AG04450 (cell line): ENCODE measurements at regions of chr5 and their contacts with region 1.

Region 1: DNA sequence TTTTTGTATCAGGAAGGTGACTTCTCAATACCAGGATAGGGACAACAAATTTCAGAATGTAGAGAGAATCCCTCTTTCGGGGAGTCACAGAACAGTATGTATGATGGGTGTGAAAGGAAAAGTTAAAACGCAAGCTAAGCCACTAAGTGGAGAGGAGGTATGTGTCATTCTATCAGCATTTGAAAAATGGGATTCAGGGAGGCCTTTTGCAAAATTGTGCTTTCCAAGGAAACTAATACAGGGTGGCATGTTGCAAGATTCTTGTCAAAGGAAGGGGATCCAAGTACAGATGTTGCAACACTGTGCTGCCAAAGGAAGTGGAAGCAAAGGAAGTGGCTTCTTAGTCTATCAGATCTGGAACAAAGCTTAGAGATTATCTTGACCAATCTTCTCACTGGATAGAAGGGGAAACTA is 12.6 kb upstream of the TNIP1 start:
- DNase-seq: no peak
- H3K4me3 ChIP-seq: no peak overlapping the region
- H3K27ac ChIP-seq: peak overlapping the region; percentile 89
- H3K27me3 ChIP-seq: no peaks in the 10 kb centered on the region
- CTCF ChIP-seq: no peak

Region 2: GRCh38 chr5:151080623-151081430 is 12.7 kb before region 1 on chr5 and contains the start of gene TNIP1:
- CTCF ChIA-PET with region 1: interaction called, 3 read pairs
- POLR2A ChIA-PET with region 1: interaction called, 13 read pairs
- DNase-seq: no peak
- H3K4me3 ChIP-seq: peak within 1 kb of the TSS; percentile 82
- H3K27ac ChIP-seq: peak within 1 kb of the TSS; percentile 90
- H3K27me3 ChIP-seq: no peaks in the 10 kb centered on the region
- CTCF ChIP-seq: no peak
- polyA plus RNA-seq, gene TNIP1: 42.6 and 49.2 TPM in 2 replicates

Region 3: DNA sequence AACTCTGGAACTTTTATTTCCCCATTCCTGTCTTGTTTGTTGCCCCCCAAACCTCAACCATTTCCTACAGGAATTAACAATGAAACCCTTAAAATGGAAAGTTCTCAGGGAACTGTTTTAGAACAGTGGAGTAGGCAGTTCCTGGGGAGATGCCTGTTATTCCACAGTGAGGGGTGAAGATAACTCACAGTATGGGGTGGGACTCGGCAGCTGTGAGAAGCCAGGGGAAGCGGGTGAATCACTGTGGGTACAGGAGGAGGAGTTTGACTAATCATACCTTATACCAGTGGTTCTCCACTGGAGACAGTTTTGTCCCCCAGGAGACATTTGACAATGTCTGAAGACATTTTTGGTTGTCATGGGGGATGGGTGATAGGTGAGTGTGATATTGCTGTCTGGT is 868.1 kb after region 1 on chr5:
- CTCF ChIA-PET with region 1: no interaction called
- POLR2A ChIA-PET with region 1: no interaction called
- DNase-seq: no peak
- H3K4me3 ChIP-seq: no peak overlapping the region
- H3K27ac ChIP-seq: no peak overlapping the region
- H3K27me3 ChIP-seq: no peaks in the 10 kb centered on the region
- CTCF ChIP-seq: no peak